ENCODE measurements at regions of chr9 and their contacts with region 1.

Region 1: DNA sequence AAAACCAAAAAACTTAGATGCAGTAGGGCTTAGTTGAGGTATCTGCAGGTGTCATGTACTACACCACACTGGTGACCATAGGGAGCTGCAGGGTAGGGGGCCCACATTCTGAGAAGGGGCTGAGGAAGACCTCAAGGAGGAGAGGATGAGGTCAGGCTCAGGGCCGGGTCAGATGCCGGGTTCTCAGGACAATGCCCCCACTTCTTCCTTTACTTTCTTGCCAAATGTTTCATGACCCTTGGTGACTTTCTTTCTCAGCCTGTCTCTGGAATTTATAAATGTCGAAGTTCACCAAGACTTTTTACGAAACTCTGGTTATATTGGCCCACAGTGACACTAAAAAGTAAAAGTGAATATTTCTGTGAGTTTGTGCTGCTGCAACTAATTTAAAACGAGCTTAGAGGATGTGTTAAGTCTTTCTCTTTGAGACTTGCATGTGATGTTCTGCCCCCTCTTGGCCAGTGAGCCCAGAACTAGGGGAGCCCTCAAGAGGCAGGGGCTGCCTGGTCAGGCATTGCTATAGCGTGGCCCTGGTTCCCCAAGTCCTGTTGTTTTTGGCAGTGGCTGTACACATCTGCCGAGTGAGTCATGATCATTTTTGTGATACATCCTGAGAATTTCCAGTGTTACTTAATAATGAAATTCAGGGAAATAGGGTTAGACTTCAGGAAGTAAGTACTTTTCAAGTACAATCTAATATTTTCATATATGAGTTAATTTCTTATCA is 11.2 kb downstream of the ACO1 start:
- DNase-seq: peak; percentile 84

Region 2: DNA sequence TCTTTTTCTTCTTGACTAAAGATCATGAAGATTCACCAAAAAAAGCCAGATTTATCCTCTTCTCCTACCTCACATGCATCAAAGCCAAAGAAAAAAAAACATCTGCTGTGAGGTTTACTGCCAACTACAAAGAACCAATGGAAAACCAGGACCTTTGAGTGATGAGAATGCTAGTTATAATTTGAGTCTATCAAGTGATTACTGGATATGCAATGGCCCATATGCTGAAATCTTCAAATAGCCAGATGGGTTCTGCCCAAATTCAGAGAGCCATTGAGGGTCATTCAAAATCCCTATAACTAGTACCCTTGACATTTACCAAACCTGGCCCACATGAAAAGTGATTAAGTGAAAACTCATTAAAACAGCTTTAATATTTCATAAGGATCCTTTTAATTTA is 89.6 kb before region 1 on chr9:
- intact Hi-C with region 1: no loop called
- DNase-seq: no peak

Region 3: DNA sequence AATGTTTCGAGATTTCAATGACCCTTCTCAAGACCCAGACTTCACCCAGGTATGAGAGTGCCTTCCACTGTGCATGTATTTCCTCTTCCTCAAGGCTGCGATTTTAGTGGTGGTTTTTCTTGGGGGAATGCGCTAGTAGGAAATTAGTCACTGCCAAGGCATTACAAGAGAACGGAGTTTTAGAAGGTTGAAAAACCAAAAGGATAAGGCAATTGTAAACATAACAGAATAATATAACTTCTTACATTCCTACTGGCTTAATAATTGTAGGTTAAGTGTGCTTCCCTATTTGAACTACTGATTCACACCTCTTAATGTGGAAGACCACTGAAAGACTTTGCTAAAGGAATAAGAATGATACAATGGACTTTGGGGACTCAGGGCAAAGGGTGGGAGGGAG is 27.7 kb after region 1 on chr9:
- intact Hi-C with region 1: loop called in 1 of 2 experiments (anchors 2 kb)
- DNase-seq: no peak

Measured in posterior vena cava (tissue), 2 donors.